ENCODE measurements at regions of chr9 and their contacts with region 1.

Region 1: GRCh38 chr9:98998441-98999151 is 54.9 kb downstream of the COL15A1 start:
- DNase-seq: peak; percentile 69
- H3K4me3 Mint-ChIP-seq: no peak overlapping the region
- H3K27ac Mint-ChIP-seq: no peak overlapping the region
- H3K4me1 Mint-ChIP-seq: peaks cover 10% of the 10 kb centered on the region
- H3K27me3 Mint-ChIP-seq: peaks cover 33% of the 10 kb centered on the region
- CTCF ChIP-seq: peak; percentile 84

Region 2: DNA sequence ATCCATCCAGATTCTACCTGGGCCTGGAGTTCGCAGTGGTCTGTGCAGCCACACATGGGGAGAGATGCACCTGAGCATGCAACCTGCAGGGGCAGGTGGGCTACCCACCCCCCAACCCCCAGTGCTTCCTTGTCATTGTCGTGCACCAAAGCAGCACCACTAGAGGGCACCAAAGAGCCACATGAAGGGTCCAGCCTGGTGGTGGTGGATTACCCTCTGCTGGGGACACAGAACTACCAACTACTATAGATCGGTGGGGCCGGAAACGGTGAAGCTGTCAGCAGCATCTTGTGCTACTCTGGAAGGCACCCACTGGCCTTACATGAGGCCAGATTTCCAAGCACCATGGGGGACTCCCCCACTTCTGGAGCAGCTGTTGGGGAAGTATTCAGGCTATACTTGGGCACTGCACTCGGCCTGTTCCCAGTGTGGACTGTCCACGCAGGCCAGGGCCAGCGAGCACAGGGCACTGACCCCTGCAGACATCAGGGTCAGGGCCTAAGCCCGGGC is 683.0 kb before region 1 on chr9:
- CTCF ChIA-PET with region 1: interaction called, 11 read pairs
- POLR2A ChIA-PET with region 1: no interaction called
- intact Hi-C with region 1: no loop called
- DNase-seq: peak; percentile 84
- H3K4me3 Mint-ChIP-seq: no peak overlapping the region
- H3K27ac Mint-ChIP-seq: no peak overlapping the region
- H3K4me1 Mint-ChIP-seq: peaks cover 6% of the 10 kb centered on the region
- H3K27me3 Mint-ChIP-seq: no peaks in the 10 kb centered on the region
- CTCF ChIP-seq: peak; percentile 93

Region 3: DNA sequence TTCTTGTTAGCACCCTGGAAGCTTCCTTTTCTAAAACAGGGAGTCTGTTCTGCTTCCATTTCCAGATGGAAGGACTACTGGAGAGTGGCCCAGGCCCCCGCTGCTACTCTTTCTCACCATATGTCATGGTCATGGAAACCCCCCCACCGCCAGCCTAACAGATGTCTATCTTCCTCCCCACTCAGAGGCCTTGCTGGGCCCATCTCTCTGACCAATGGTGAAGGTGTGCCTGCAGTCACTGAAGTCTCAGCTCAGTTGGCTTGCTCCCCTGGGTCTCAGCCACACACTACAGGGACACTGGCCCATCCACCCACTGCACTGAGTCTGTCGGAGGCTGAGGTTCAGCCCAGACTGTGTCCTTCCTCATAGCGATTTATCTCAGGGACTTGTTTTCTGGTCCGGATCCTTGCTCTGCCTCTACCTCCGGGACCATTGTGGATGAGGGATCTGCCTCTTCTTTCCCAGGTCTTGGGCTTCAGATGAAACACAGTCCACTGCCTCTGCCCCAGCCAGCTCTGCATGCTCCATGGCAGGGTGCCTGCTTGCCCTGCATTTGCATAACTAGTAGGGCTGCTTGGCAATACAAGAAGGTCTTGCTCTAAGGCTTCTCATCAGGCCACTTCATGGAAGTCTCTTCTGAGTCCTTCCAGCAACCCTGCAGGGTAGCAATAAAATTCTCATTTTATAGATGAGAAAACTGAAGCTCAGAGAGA is 160.3 kb before region 1 on chr9:
- CTCF ChIA-PET with region 1: interaction called, 226 read pairs
- POLR2A ChIA-PET with region 1: no interaction called
- intact Hi-C with region 1: no loop called
- DNase-seq: no peak
- H3K4me3 Mint-ChIP-seq: no peak overlapping the region
- H3K27ac Mint-ChIP-seq: no peak overlapping the region
- H3K4me1 Mint-ChIP-seq: no peaks in the 10 kb centered on the region
- H3K27me3 Mint-ChIP-seq: peaks cover 62% of the 10 kb centered on the region
- CTCF ChIP-seq: no peak

Region 4: GRCh38 chr9:98860871-98861293 is 137.7 kb before region 1 on chr9:
- CTCF ChIA-PET with region 1: interaction called, 20 read pairs
- POLR2A ChIA-PET with region 1: no interaction called
- intact Hi-C with region 1: loop called (anchors 1 kb)
- DNase-seq: peak; percentile 86
- H3K4me3 Mint-ChIP-seq: no peak overlapping the region
- H3K27ac Mint-ChIP-seq: no peak overlapping the region
- H3K4me1 Mint-ChIP-seq: peaks cover 7% of the 10 kb centered on the region
- H3K27me3 Mint-ChIP-seq: peaks cover 26% of the 10 kb centered on the region
- CTCF ChIP-seq: peak; percentile 16

Region 5: DNA sequence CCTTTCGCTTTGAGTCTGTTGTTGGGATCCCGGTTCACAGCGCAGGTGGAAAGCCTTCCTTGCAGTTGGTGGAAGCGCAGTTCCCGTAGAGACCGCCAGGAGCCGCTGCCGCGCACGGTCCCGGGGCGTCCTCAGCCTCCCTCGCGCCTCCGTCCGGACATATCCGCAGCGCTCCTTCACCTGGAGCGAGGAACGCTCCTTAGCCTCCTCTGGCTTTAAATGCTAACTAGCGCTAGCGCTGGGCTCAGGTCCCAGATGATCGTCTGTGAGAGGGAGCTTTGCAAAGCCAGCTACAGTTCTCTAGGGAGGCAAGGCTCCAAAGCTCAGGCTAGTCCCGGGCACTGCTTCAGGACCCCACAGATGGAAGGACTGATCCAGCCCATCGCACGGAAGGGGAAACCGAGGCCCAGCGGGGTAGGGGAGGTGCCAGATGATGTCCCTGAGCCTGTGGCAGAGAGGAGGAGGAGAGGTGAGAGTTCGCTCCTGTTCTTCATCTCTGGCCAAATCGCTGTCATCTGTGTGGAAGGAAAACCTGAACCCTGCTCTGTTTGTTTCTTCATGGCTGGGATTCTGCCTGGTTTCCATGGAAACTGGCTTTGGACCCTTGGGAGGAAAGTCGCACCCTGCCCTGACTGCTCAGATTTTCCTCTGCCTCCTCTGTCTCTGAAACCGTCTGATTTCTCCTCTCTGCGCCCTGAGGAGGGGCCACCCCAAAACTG is 23.4 kb before region 1 on chr9:
- CTCF ChIA-PET with region 1: interaction called, 96 read pairs
- POLR2A ChIA-PET with region 1: no interaction called
- intact Hi-C with region 1: loop called (anchors 1 kb)
- DNase-seq: peak; percentile 70
- H3K4me3 Mint-ChIP-seq: no peak overlapping the region
- H3K27ac Mint-ChIP-seq: no peak overlapping the region
- H3K4me1 Mint-ChIP-seq: no peaks in the 10 kb centered on the region
- H3K27me3 Mint-ChIP-seq: peaks cover 29% of the 10 kb centered on the region
- CTCF ChIP-seq: peak; percentile 93

Region 6: GRCh38 chr9:99104459-99105151 is 106.0 kb after region 1 on chr9 and contains the start of gene TGFBR1:
- CTCF ChIA-PET with region 1: interaction called, 18 read pairs
- POLR2A ChIA-PET with region 1: no interaction called
- intact Hi-C with region 1: no loop called
- DNase-seq: peak; percentile 89
- H3K4me3 Mint-ChIP-seq: peak within 1 kb of the TSS; percentile 91
- H3K27ac Mint-ChIP-seq: peak within 1 kb of the TSS; percentile 88
- H3K4me1 Mint-ChIP-seq: peaks cover 45% of the 10 kb centered on the region
- H3K27me3 Mint-ChIP-seq: no peaks in the 10 kb centered on the region
- CTCF ChIP-seq: no peak
- total RNA-seq, gene TGFBR1: 27.6 and 29.4 TPM in 2 replicates

Region 7: DNA sequence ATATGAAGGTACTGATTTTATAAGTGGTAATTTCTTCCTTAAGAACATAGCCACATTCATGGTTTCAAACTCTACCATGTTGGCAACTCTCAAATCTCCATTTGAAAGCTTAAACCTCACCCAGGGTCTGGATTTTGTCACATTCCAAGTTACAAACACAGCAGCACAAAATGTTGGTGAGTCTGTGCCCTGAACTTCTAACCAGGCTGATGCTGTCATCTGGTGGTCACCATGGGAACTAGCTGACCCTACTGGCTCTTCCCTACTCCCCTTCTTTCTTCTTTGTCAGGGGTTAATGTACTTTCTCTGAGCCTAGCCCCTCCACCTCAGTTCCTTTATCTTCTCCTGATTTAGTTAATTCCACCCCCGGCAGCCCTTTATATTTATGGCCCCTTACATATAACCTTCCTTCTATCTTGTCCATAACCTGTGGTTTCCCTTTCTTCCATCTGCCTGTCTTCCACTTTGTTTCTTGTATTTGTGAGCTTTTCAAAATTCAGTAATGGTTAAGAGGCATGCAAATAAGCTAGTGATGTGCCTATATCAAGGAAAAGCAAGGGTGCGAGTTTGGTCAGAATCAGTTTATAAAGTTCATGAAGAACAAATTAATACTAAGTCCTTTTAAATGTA is 142.2 kb after region 1 on chr9:
- CTCF ChIA-PET with region 1: interaction called, 225 read pairs
- POLR2A ChIA-PET with region 1: interaction called, 3 read pairs
- intact Hi-C with region 1: loop called (anchors 1 kb)
- DNase-seq: peak; percentile 47
- H3K4me3 Mint-ChIP-seq: no peak overlapping the region
- H3K27ac Mint-ChIP-seq: no peak overlapping the region
- H3K4me1 Mint-ChIP-seq: peaks cover 5% of the 10 kb centered on the region
- H3K27me3 Mint-ChIP-seq: no peaks in the 10 kb centered on the region
- CTCF ChIP-seq: peak; percentile 87

Measured in MCF 10A (cell line).